A549 (cell line): ENCODE measurements at regions of chr11 and their contacts with region 1.

Region 1: DNA sequence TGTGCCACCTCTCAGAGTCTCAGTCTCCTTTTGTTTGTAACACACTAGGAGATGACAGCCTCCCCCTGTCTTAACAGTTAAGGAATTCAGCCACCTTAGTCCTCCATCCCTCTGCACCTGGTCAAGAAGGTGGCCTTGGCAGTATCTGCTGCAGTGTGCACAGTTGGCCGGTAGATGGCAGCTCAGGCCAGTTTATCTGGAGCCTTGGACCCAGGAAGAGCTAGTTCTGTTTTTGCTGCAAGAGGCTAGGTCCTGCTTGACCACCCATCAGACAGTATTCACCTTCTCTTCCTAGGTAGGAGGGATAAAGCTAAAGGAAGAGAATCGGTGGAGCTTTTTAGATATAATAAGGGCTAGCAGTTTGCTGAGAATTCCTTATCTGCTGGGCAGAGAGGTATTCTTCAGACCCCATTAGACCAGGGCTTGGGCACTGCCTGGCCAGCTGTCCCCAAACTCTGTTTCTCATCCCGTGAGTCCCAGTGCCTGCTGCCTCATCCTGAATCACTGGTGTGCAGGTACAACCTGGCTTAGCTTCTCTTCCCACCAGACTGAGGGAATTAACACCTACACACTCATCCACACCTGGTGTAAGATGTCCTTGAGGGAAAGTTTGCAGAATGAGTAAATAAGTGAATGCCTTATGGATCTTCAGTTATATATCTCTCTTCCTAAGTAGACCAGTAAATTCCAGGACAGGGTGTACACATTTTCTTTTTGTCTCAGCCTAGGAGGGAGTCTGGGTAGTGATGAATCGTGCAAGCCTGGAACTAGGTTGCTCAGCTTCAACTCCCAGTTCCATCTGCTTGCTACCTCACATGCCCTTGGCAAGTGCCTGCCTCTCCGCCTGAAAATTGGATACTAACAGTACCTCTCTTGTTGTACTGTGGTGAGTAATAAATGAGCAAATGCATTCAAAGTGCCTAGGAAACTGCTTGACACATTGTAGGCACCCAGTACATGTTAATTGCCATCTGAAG is 70.8 kb upstream of the NARS2 start:
- DNase-seq: peak; percentile 58 to 68
- ATAC-seq: peak; percentile 81 to 92
- H3K4me3 ChIP-seq: no peak overlapping the region
- H3K27ac ChIP-seq: no peak overlapping the region
- H3K4me1 ChIP-seq: 0 out of 3 replicates have a peak, but pooled peaks cover 3% of the 10 kb centered on the region
- CTCF ChIP-seq: peak; percentile 89
- EP300 ChIP-seq: no peak
- POLR2A ChIP-seq: no peak
- RAD21 ChIP-seq: peak; percentile 91

Region 2: GRCh38 chr11:78664636-78665035 is 19.1 kb after region 1 on chr11:
- CTCF ChIA-PET with region 1: interaction called, 24 read pairs
- POLR2A ChIA-PET with region 1: no interaction called
- DNase-seq: no peak
- ATAC-seq: no peak
- H3K4me3 ChIP-seq: no peak overlapping the region
- H3K27ac ChIP-seq: no peak overlapping the region
- H3K4me1 ChIP-seq: no peaks in the 10 kb centered on the region
- CTCF ChIP-seq: no peak
- EP300 ChIP-seq: no peak
- POLR2A ChIP-seq: no peak
- RAD21 ChIP-seq: no peak

Region 3: GRCh38 chr11:78722786-78723185 is 77.3 kb after region 1 on chr11:
- CTCF ChIA-PET with region 1: interaction called, 48 read pairs
- POLR2A ChIA-PET with region 1: no interaction called
- DNase-seq: no peak
- ATAC-seq: no peak
- H3K4me3 ChIP-seq: no peak overlapping the region
- H3K27ac ChIP-seq: no peak overlapping the region
- H3K4me1 ChIP-seq: no peaks in the 10 kb centered on the region
- CTCF ChIP-seq: no peak
- EP300 ChIP-seq: no peak
- POLR2A ChIP-seq: no peak
- RAD21 ChIP-seq: no peak

Region 4: GRCh38 chr11:79100093-79100910 is 454.8 kb after region 1 on chr11:
- CTCF ChIA-PET with region 1: interaction called, 58 read pairs
- POLR2A ChIA-PET with region 1: interaction called, 4 read pairs
- DNase-seq: peak; percentile 70 to 81
- ATAC-seq: peak; percentile 71 to 95
- H3K4me3 ChIP-seq: no peak overlapping the region
- H3K27ac ChIP-seq: peak overlapping the region in 1 of 2 experiments; percentile 71; a peak in 3 of 6 replicates
- H3K4me1 ChIP-seq: peaks cover 22% of the 10 kb centered on the region
- CTCF ChIP-seq: peak; percentile 74
- EP300 ChIP-seq: no peak
- POLR2A ChIP-seq: no peak
- RAD21 ChIP-seq: peak; percentile 84 to 90

Region 5: GRCh38 chr11:80155412-80156017 is 1510.0 kb after region 1 on chr11:
- CTCF ChIA-PET with region 1: interaction called, 10 read pairs
- POLR2A ChIA-PET with region 1: no interaction called
- DNase-seq: peak; percentile 1 to 22
- ATAC-seq: peak; percentile 73 to 76; a peak in 4 of 6 replicates
- H3K4me3 ChIP-seq: no peak overlapping the region
- H3K27ac ChIP-seq: no peak overlapping the region
- H3K4me1 ChIP-seq: no peaks in the 10 kb centered on the region
- CTCF ChIP-seq: peak; percentile 36
- EP300 ChIP-seq: no peak
- POLR2A ChIP-seq: no peak
- RAD21 ChIP-seq: peak; percentile 45 to 58